ENCODE measurements at regions of chr20 and their contacts with region 1.

Region 1: DNA sequence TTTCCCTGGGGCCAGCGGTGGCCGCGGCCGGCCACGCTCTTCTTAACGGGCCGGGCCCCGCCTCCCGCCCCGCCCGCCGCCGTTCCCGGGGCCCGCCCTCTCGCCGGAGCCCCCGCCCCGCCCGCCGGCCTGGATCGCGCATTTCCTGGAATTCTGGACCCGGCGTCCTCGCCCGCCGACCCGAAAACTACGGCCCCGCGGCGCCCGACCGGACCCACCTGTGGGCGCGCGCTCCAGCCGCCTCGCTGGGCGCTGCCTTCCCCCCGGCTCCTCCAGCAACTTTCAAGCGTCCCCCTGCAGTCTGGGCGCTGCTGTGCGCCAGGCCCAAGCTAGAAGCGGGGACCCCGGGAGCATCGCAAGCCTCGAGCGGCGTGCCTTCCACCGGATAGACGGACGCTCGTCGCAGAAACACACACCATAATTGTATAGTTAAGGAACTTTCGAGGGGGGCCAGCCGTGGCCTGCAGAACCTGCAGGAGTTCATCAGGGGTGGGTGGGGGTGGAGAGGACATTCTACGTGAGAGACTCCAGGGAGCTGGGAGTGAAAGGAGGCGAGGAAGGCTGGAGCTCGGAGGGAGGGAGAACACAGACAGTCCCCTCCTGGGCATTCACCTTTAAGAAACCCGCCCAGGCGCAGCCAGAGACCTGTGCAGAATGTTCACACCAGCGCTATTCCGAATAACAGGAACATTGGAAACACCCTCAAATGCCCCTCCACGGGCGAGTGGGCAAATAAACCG is at the start of gene ADA:
- DNase-seq: peak; percentile 65
- ATAC-seq: peak; percentile 48
- H3K4me3 Mint-ChIP-seq: peak within 1 kb of the TSS; percentile 78
- H3K27ac Mint-ChIP-seq: peak within 1 kb of the TSS; percentile 89
- H3K4me1 Mint-ChIP-seq: peaks cover 50% of the 10 kb centered on the region
- H3K27me3 Mint-ChIP-seq: no peaks in the 10 kb centered on the region
- total RNA-seq, gene ADA: 33.8 to 37.8 TPM

Region 2: DNA sequence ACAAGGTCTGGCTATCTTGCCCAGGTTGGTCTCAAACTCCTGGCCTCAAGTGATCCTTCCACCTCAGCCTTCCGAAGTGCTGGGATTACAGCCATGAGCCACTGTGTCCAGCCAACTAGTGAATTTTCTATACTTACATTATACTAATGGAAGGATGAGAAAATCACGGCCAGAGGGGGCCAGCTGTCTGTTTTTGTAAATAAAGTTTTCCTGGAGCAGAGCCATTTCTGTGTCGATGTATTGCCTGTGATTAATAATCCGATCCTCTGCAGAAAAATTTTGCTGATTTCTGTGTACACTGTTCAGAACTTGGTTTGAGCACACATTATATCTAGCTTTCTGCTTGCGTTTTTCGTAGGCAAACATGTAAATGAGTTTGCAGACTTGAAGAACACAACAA is 1490.9 kb before region 1 on chr20:
- CTCF ChIA-PET with region 1: no interaction called
- POLR2A ChIA-PET with region 1: no interaction called
- intact Hi-C with region 1: no loop called
- DNase-seq: no peak
- ATAC-seq: no peak
- H3K4me3 Mint-ChIP-seq: no peak overlapping the region
- H3K27ac Mint-ChIP-seq: no peak overlapping the region
- H3K4me1 Mint-ChIP-seq: no peaks in the 10 kb centered on the region
- H3K27me3 Mint-ChIP-seq: peaks cover 9% of the 10 kb centered on the region

Region 3: GRCh38 chr20:44475694-44476560 is 175.9 kb before region 1 on chr20 and contains the start of gene TTPAL:
- CTCF ChIA-PET with region 1: no interaction called
- POLR2A ChIA-PET with region 1: no interaction called
- intact Hi-C with region 1: loop called in 1 of 2 experiments (anchors 1 kb)
- DNase-seq: peak; percentile 96
- ATAC-seq: peak; percentile 97
- H3K4me3 Mint-ChIP-seq: peak within 1 kb of the TSS; percentile 91
- H3K27ac Mint-ChIP-seq: peak within 1 kb of the TSS; percentile 97
- H3K4me1 Mint-ChIP-seq: peaks cover 22% of the 10 kb centered on the region
- H3K27me3 Mint-ChIP-seq: no peaks in the 10 kb centered on the region
- total RNA-seq, gene TTPAL: 18.3 to 21.5 TPM

Region 4: DNA sequence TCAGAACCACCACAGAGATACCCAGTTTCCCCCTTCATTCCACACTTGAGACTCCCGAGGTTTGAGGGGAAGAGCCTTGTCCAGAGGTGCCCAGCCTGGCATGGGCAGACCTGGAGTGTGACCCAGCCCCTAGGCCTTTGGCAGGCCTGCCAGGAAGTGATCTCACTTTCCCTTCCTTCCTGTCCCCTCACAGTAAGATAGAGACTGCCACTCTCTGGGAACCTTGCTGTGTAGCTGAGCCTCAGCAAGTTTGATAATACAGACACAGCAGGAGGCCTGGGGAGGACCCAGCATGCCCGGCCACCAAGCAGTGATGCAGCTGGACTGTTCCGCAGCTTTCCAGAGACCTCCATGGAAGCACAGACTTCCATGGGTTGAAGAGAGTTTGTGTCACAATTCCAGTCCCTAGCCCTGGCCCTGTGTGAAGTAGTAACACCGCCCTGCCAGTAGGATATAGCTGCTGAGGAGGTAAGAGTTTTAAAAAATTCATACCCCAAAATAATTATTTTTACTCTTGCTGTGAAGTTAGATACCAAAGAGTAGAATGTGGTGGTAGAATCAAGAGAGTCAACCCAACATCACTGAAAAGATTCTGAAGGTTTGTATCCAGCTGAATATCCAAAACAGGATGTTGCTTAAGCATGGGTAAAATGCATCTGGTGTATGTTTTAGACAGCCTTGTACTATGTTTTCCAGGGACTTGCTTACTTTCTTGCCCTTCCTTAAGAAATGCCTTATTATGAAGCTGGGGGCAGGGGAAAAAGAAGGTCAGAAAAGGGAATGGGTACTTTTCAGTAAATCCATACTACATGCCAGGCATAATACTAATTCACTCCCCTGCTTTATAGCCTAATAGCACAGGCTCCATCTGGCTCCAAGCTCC is 53.2 kb before region 1 on chr20:
- CTCF ChIA-PET with region 1: no interaction called
- POLR2A ChIA-PET with region 1: no interaction called
- intact Hi-C with region 1: no loop called
- DNase-seq: peak; percentile 27
- ATAC-seq: peak; percentile 83
- H3K4me3 Mint-ChIP-seq: peak overlapping the region; percentile 64
- H3K27ac Mint-ChIP-seq: peak overlapping the region; percentile 76
- H3K4me1 Mint-ChIP-seq: peaks cover 17% of the 10 kb centered on the region
- H3K27me3 Mint-ChIP-seq: no peaks in the 10 kb centered on the region

Region 5: DNA sequence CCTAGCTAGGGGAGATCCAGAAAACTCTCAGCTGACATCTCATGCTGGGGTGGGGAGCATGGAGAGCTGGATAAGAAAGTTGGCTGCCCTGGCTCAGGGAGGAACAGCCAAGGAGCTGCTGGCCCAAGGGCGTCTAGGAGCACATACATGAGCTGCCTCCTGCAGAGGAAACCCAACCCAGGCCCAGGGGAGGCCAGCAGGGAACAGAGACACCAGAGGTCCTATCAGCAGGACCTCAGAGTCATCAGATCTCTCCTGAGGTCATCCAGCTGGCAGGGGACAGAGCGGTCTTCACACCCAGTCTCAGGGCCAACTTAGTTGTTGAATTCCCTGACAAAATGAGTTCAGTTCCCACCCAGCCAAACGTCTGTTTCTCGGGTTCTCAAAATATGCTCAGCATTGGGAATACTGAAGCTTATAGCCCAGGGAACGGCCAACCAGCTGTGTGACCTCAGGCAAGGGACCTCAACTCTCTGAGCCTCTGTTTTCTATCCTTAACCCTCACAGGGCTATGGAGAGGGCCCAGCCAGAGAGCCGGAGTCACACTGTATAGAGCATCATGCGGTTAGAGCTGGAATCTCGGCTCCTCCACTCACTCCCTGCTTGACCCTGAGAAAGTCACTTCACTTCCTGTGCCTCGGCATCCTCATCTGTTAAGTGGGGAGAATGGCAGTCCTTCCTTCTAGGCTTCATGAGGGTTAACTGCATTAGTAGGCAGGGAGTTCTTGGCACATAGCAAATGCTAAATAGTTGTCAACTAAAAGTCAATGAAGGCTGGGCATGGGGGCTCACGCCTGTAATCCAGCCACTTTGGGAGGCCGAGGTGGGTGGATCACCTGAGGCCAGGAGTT is 14.1 kb before region 1 on chr20:
- CTCF ChIA-PET with region 1: interaction called, 11 read pairs
- POLR2A ChIA-PET with region 1: no interaction called
- intact Hi-C with region 1: no loop called
- DNase-seq: no peak
- ATAC-seq: no peak
- H3K4me3 Mint-ChIP-seq: no peak overlapping the region
- H3K27ac Mint-ChIP-seq: no peak overlapping the region
- H3K4me1 Mint-ChIP-seq: peaks cover 15% of the 10 kb centered on the region
- H3K27me3 Mint-ChIP-seq: no peaks in the 10 kb centered on the region

Region 6: GRCh38 chr20:45727044-45727443 is 1075.2 kb after region 1 on chr20:
- CTCF ChIA-PET with region 1: no interaction called
- POLR2A ChIA-PET with region 1: no interaction called
- intact Hi-C with region 1: no loop called
- DNase-seq: no peak
- ATAC-seq: peak; percentile 49
- H3K4me3 Mint-ChIP-seq: no peak overlapping the region
- H3K27ac Mint-ChIP-seq: no peak overlapping the region
- H3K4me1 Mint-ChIP-seq: peaks cover 5% of the 10 kb centered on the region
- H3K27me3 Mint-ChIP-seq: peaks cover 42% of the 10 kb centered on the region

Measured in activated CD4-positive, alpha-beta T cell treated with anti-CD3 and anti-CD28 coated beads for 36 hours (primary cell).